Panc1 (cell line): ENCODE measurements at regions of chr7 and their contacts with region 1.

Region 1: GRCh38 chr7:26686448-26686981 is 177.9 kb downstream of the SKAP2 start:
- DNase-seq: peak; percentile 38
- ATAC-seq: 0 out of 2 replicates have a peak, but pooled peaks have one; percentile 51
- H3K4me3 ChIP-seq: no peak overlapping the region
- H3K27ac ChIP-seq: no peak overlapping the region
- H3K4me1 ChIP-seq: peaks cover 6% of the 10 kb centered on the region; the same call in 1 of the 2 replicates
- H3K27me3 ChIP-seq: no peaks in the 10 kb centered on the region
- CTCF ChIP-seq: peak; percentile 86

Region 2: GRCh38 chr7:26937939-26938623 is 251.6 kb after region 1 on chr7:
- CTCF ChIA-PET with region 1: no interaction called
- POLR2A ChIA-PET with region 1: interaction called, 12 read pairs
- in situ Hi-C with region 1: no loop called
- intact Hi-C with region 1: no loop called
- DNase-seq: no peak
- ATAC-seq: no peak
- H3K4me3 ChIP-seq: no peak overlapping the region
- H3K27ac ChIP-seq: no peak overlapping the region
- H3K4me1 ChIP-seq: no peaks in the 10 kb centered on the region
- H3K27me3 ChIP-seq: peaks cover 4% of the 10 kb centered on the region; the same call in 1 of the 2 replicates
- CTCF ChIP-seq: no peak

Region 3: DNA sequence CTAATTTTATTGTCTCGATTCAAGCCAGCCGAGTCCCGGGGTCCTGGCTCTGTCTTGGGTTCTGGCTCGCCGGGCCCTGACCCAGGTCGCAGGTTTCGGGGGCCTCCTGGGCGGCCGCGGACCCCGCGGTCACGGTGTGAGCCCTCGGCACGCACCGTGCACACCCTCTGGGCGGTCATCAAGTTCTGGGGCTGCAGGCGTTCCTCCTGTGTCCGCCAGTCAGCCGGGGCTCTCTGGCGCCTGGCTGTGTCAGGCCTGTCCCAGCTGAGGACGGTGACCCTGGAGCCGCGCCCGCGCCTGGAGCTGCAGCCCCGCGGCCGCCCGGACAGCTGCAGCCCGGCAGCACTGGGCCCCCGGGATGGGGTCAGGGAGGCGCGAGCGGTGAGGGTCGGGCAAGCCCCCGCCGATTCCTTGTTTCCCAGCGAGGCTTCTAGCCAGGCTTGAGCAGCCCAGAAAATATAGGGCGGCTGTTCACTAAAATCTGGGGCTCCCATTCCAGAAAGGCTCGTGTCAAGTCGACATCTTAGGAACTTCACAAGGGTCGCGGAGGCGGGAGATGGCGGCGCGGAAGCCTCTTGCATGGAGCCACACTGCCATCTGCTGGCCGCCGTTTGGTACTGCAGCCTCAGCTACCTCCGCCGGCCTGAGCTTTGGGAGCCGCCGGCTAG is 474.2 kb after region 1 on chr7:
- CTCF ChIA-PET with region 1: interaction called, 18 read pairs
- POLR2A ChIA-PET with region 1: no interaction called
- in situ Hi-C with region 1: no loop called
- intact Hi-C with region 1: loop called (anchors 2 kb)
- DNase-seq: no peak
- ATAC-seq: peak; percentile 87
- H3K4me3 ChIP-seq: peak overlapping the region; percentile 71 to 80
- H3K27ac ChIP-seq: peak overlapping the region; percentile 81
- H3K4me1 ChIP-seq: no peaks in the 10 kb centered on the region
- H3K27me3 ChIP-seq: no peaks in the 10 kb centered on the region
- CTCF ChIP-seq: peak; percentile 100